Activated B cell treated with CpG ODN at 0.5 μM for 24 hours (primary cell): ENCODE measurements at regions of chr19 and their contacts with region 1.

Region 1: DNA sequence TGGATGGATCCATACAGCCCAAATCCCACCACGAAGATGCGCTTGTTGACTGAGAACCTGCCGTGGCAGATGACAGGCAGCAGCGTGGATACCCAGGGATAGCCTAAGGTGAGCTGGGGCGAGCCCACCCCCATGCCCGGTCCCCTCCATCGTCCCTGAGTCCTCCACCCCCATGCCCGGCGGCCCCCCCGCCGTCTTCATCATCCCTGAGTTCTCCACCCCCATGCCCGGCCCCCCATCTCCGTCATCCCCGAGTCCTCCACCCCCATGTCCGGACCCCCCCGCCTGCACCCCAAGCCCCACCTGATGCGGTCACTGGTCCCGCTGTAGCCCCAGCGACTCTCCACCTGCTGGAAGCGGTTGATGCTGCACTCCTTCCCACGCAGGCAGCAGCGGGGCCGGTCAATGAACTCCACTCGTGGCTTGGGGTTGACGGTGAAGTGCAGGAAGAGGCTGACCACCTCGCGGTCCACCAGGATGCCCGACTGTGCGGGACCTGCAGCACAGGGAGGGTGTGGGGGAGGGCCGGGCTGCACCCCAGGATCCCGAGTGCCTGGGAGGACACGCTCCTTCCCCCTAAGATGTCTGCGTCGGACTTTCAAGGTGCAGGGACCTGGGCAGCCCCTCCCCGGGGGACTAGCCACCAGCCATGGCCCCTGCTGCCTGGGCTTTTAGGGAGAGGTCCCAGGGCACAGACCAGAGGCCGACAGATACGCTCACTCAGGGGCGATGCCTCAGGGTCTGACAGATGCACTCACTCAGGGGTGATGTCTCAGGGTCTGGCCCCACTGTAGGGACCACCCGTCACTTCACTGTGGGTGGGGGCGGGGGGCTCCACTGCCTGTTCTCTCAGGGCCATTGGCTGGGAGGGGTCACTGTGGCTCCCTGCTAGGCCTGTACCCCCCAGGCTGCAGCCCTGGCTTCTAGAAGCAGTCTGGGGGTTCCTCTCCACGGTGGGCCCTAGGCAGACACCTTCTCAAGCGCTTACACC is 28.0 kb downstream of the BTBD2 start:
- DNase-seq: no peak
- ATAC-seq: no peak
- H3K4me3 Mint-ChIP-seq: no peak overlapping the region
- H3K27ac Mint-ChIP-seq: no peak overlapping the region
- H3K4me1 Mint-ChIP-seq: no peaks in the 10 kb centered on the region
- H3K27me3 Mint-ChIP-seq: no peaks in the 10 kb centered on the region
- CTCF ChIP-seq: no peak

Region 2: GRCh38 chr19:1848399-1849131 is 138.9 kb before region 1 on chr19 and contains the start of gene REXO1:
- CTCF ChIA-PET with region 1: no interaction called
- POLR2A ChIA-PET with region 1: interaction called, 10 read pairs
- intact Hi-C with region 1: no loop called
- DNase-seq: peak; percentile 98
- ATAC-seq: peak; percentile 74
- H3K4me3 Mint-ChIP-seq: peak within 1 kb of the TSS; percentile 88
- H3K27ac Mint-ChIP-seq: peak within 1 kb of the TSS; percentile 88
- H3K4me1 Mint-ChIP-seq: peaks cover 69% of the 10 kb centered on the region
- H3K27me3 Mint-ChIP-seq: no peaks in the 10 kb centered on the region
- CTCF ChIP-seq: peak; percentile 86
- total RNA-seq, gene REXO1: 56.3 and 69.6 TPM in 2 replicates